ENCODE measurements at regions of chr2 and their contacts with region 1.

Region 1: GRCh38 chr2:102082571-102083392 is 59.8 kb upstream of the IL1R1 start:
- DNase-seq: peak; percentile 88
- ATAC-seq: peak; percentile 83
- H3K4me3 ChIP-seq: no peak overlapping the region
- H3K27ac ChIP-seq: peak overlapping the region; percentile 59
- H3K4me1 ChIP-seq: peaks cover 31% of the 10 kb centered on the region
- H3K27me3 ChIP-seq: no peaks in the 10 kb centered on the region
- CTCF ChIP-seq: no peak
- EP300 ChIP-seq: peak; percentile 71 to 96
- POLR2A ChIP-seq: no peak
- RAD21 ChIP-seq: no peak

Region 2: GRCh38 chr2:102027036-102027980 is 55.5 kb before region 1 on chr2:
- CTCF ChIA-PET with region 1: interaction called, 5 read pairs
- POLR2A ChIA-PET with region 1: interaction called, 17 read pairs
- RAD21 ChIA-PET with region 1: interaction called, 53 read pairs
- SMC1A ChIA-PET with region 1: interaction called, 108 read pairs
- in situ Hi-C with region 1: no loop called
- intact Hi-C with region 1: loop called (anchors 1 kb)
- DNase-seq: no peak
- ATAC-seq: no peak
- H3K4me3 ChIP-seq: no peak overlapping the region
- H3K27ac ChIP-seq: no peak overlapping the region
- H3K4me1 ChIP-seq: peaks cover 7% of the 10 kb centered on the region
- H3K27me3 ChIP-seq: no peaks in the 10 kb centered on the region
- CTCF ChIP-seq: no peak
- EP300 ChIP-seq: no peak
- POLR2A ChIP-seq: no peak
- RAD21 ChIP-seq: no peak

Region 3: GRCh38 chr2:102057502-102058292 is 25.1 kb before region 1 on chr2:
- CTCF ChIA-PET with region 1: interaction called, 8 read pairs
- POLR2A ChIA-PET with region 1: interaction called, 11 read pairs
- RAD21 ChIA-PET with region 1: interaction called, 35 read pairs
- SMC1A ChIA-PET with region 1: interaction called, 37 read pairs
- in situ Hi-C with region 1: no loop called
- intact Hi-C with region 1: loop called (anchors 1 kb)
- DNase-seq: peak; percentile 65
- ATAC-seq: peak; percentile 92
- H3K4me3 ChIP-seq: no peak overlapping the region
- H3K27ac ChIP-seq: no peak overlapping the region
- H3K4me1 ChIP-seq: no peaks in the 10 kb centered on the region
- H3K27me3 ChIP-seq: no peaks in the 10 kb centered on the region; a peak in 1 of 4 replicates
- CTCF ChIP-seq: no peak
- EP300 ChIP-seq: peak; percentile 66 to 91; a peak in 3 of 4 replicates
- POLR2A ChIP-seq: no peak
- RAD21 ChIP-seq: no peak

Region 4: DNA sequence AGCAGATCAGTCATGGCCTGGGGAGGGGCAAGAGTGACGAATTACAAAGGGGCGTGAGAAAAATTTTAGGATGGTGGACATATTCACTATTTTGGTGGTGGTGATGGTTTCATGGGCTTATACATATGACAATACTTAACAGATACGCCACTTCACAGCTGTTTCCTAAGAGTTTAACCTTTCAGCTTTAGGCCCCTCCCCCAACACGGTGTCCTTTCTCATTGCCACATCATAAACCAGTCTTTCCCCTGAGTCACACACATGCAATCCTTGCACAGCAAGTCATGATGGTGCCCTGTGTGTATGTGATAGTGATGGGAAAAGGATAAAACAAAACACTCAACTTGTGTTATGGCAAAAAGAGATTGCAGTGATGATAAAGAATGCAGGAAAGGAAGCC is 12.1 kb after region 1 on chr2:
- CTCF ChIA-PET with region 1: interaction called, 8 read pairs
- POLR2A ChIA-PET with region 1: interaction called, 9 read pairs
- RAD21 ChIA-PET with region 1: interaction called, 9 read pairs
- SMC1A ChIA-PET with region 1: interaction called, 21 read pairs
- in situ Hi-C with region 1: no loop called
- intact Hi-C with region 1: loop called (anchors 1 kb)
- DNase-seq: no peak
- ATAC-seq: no peak
- H3K4me3 ChIP-seq: no peak overlapping the region
- H3K27ac ChIP-seq: no peak overlapping the region
- H3K4me1 ChIP-seq: no peaks in the 10 kb centered on the region
- H3K27me3 ChIP-seq: no peaks in the 10 kb centered on the region
- CTCF ChIP-seq: no peak
- EP300 ChIP-seq: no peak
- POLR2A ChIP-seq: no peak
- RAD21 ChIP-seq: no peak

Region 5: GRCh38 chr2:102114290-102114721 is 31.5 kb after region 1 on chr2:
- CTCF ChIA-PET with region 1: interaction called, 3 read pairs
- POLR2A ChIA-PET with region 1: interaction called, 8 read pairs
- RAD21 ChIA-PET with region 1: interaction called, 29 read pairs
- SMC1A ChIA-PET with region 1: interaction called, 19 read pairs
- in situ Hi-C with region 1: no loop called
- intact Hi-C with region 1: no loop called
- DNase-seq: peak; percentile 33
- ATAC-seq: peak; percentile 67
- H3K4me3 ChIP-seq: no peak overlapping the region
- H3K27ac ChIP-seq: peak overlapping the region; percentile 17; the same call in 1 of the 2 replicates
- H3K4me1 ChIP-seq: peaks cover 14% of the 10 kb centered on the region
- H3K27me3 ChIP-seq: no peaks in the 10 kb centered on the region
- CTCF ChIP-seq: no peak
- EP300 ChIP-seq: no peak
- POLR2A ChIP-seq: no peak
- RAD21 ChIP-seq: no peak

Region 6: GRCh38 chr2:102436323-102436722 is 353.5 kb after region 1 on chr2:
- CTCF ChIA-PET with region 1: no interaction called
- POLR2A ChIA-PET with region 1: no interaction called
- RAD21 ChIA-PET with region 1: no interaction called
- SMC1A ChIA-PET with region 1: no interaction called
- in situ Hi-C with region 1: no loop called
- intact Hi-C with region 1: loop called (anchors 5 kb)
- DNase-seq: no peak
- ATAC-seq: peak; percentile 49
- H3K4me3 ChIP-seq: peak overlapping the region; percentile 40; the same call in 1 of the 2 replicates
- H3K27ac ChIP-seq: peak overlapping the region; percentile 76
- H3K4me1 ChIP-seq: peaks cover 21% of the 10 kb centered on the region
- H3K27me3 ChIP-seq: no peaks in the 10 kb centered on the region
- CTCF ChIP-seq: no peak
- EP300 ChIP-seq: no peak
- POLR2A ChIP-seq: no peak
- RAD21 ChIP-seq: no peak

Measured in GM12878 (cell line).